ENCODE measurements at regions of chr11 and their contacts with region 1.

Region 1: GRCh38 chr11:129143335-129143734 is 48.8 kb downstream of the ARHGAP32 start:
- DNase-seq: peak; percentile 58 to 79
- ATAC-seq: peak; percentile 92 to 99
- H3K4me3 ChIP-seq: no peak overlapping the region
- H3K27ac ChIP-seq: no peak overlapping the region
- H3K4me1 ChIP-seq: peaks cover 0 to 4% of the 10 kb centered on the region in 2 donors
- H3K27me3 ChIP-seq: no peaks in the 10 kb centered on the region
- CTCF ChIP-seq: no peak
- POLR2A ChIP-seq: no peak

Region 2: DNA sequence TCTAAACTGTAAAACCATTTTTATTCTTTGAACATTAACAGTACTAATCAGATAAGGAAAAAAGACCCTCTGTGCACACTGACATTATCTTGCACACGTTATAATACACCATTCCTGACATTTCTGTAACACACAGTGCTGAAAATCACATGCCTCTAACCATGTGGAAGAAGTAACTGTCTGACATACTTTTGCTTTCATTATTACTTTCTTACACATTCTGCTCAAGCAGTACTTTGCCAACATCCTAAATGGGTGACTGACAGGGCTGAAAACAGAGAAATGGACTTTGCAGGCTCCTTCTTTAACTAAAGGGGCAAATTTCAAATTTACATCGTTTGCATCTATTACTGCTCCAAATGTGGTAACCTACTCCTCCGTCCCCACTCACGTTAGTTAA is 177.8 kb before region 1 on chr11:
- in situ Hi-C with region 1: no loop called
- intact Hi-C with region 1: no loop called
- DNase-seq: no peak
- ATAC-seq: no peak
- H3K4me3 ChIP-seq: no peak overlapping the region
- H3K27ac ChIP-seq: no peak overlapping the region
- H3K4me1 ChIP-seq: no peaks in the 10 kb centered on the region
- H3K27me3 ChIP-seq: no peaks in the 10 kb centered on the region
- CTCF ChIP-seq: no peak
- POLR2A ChIP-seq: no peak

Region 3: DNA sequence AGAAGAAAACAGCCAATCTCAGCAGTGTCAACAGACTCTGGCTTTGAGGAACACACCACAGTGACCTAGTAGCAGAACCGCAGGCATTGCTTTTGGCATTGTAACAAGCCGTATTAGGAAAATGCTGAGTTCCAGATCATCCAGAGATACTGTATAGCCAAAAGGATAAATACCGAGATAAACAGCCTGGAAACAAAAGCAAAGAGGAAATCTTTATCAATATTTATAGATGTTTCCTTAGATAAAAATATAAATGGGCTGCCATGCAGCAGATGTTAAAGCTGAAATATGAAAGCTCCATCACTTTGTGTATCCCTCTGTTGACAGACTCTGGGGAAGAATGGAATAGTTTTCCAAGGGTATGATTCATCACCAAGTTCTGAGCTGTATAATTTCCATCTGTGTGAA is 101.7 kb before region 1 on chr11:
- in situ Hi-C with region 1: loop called in 1 of 4 experiments (anchors 25 kb)
- intact Hi-C with region 1: no loop called
- DNase-seq: no peak
- ATAC-seq: no peak
- H3K4me3 ChIP-seq: no peak overlapping the region
- H3K27ac ChIP-seq: no peak overlapping the region
- H3K4me1 ChIP-seq: no peaks in the 10 kb centered on the region
- H3K27me3 ChIP-seq: no peaks in the 10 kb centered on the region
- CTCF ChIP-seq: no peak
- POLR2A ChIP-seq: no peak

Region 4: DNA sequence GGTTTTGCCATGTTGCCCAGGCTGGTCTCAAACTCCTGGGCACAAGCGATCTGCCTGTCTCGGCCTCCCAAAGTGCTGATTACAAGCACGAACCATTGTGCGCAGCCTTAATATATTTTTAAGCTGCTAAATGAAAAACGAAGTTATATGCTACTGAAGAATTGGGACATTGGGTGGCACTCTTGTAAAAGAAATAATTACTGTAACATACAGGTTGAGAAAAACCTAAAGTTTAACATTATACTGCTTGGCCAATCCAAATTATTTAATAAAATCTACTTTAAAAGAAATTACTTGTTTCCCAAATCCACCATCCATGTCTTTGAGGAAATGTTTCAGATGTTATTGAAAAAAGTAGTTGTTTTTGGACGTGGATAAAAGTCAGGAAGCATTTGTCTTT is 86.7 kb after region 1 on chr11:
- in situ Hi-C with region 1: no loop called
- intact Hi-C with region 1: no loop called
- DNase-seq: no peak
- ATAC-seq: no peak
- H3K4me3 ChIP-seq: no peak overlapping the region
- H3K27ac ChIP-seq: no peak overlapping the region
- H3K4me1 ChIP-seq: no peaks in the 10 kb centered on the region
- H3K27me3 ChIP-seq: no peaks in the 10 kb centered on the region
- CTCF ChIP-seq: no peak
- POLR2A ChIP-seq: no peak

Region 5: GRCh38 chr11:129279326-129280026 is 136.1 kb after region 1 on chr11:
- in situ Hi-C with region 1: no loop called
- intact Hi-C with region 1: loop called (anchors 2 kb)
- DNase-seq: peak; percentile 52 to 69
- ATAC-seq: peak; percentile 84 to 87
- H3K4me3 ChIP-seq: peak overlapping the region; percentile 51 to 74 (median 63)
- H3K27ac ChIP-seq: peak overlapping the region; percentile 67 to 70 (median 68)
- H3K4me1 ChIP-seq: peaks cover 37 to 46% of the 10 kb centered on the region in 2 donors
- H3K27me3 ChIP-seq: no peaks in the 10 kb centered on the region
- CTCF ChIP-seq: no peak
- POLR2A ChIP-seq: peak; percentile 62

Region 6: DNA sequence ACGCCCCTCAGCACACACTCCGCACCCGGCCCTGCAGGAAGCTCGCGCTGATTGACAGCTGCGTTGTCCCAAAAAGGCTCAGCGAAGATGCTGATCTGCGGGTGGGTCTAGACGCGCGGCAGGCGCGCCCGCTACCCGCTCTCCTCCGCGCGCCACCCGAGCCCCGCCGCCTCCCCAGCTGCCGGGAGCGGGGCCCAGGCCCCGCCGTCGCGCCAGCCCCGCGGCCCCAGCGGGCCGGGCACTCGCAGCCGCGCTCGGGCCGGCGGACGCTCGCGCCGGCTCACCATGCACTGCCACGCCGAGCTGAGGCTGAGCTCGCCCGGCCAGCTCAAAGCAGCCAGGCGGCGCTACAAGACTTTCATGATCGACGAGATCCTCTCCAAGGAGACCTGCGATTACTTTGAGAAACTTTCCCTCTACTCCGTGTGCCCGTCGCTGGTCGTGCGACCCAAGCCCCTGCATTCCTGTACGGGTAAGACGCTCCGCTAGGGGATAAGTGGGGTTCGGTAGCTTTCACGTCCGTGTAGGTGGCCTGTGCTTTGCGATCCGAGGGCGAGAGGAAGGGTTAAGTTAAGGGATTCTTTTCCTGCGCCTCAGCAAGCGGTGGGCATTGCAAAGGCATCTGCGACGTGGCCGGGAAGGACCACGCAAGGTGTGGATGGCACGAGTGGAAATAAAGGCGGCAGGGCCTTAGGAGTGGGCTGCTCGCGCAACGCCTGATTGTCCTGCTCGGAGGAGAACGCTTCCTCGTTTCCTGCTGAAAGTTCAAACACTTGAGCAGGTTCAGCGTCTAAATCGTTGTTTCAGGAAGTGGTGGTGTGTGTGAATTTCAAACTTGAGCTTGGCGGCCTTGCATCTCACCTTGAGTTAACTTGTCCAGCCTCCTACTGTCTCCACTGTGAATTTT is 232.7 kb after region 1 on chr11 and contains the start of gene BARX2:
- in situ Hi-C with region 1: no loop called
- intact Hi-C with region 1: no loop called
- DNase-seq: no peak
- ATAC-seq: peak in 1 of 2 donors; percentile 52
- H3K4me3 ChIP-seq: peak within 1 kb of the TSS in 3 of 4 donors; percentile 22 to 46 (median 26)
- H3K27ac ChIP-seq: peak within 1 kb of the TSS in 1 of 4 donors; percentile 47
- H3K4me1 ChIP-seq: peaks cover 0 to 5% of the 10 kb centered on the region in 2 donors
- H3K27me3 ChIP-seq: peaks cover 70 to 91% (median 73%) of the 10 kb centered on the region in 3 donors
- CTCF ChIP-seq: no peak
- POLR2A ChIP-seq: no peak
- total RNA-seq, gene BARX2: 1.2 to 4.4 TPM in 2 of 4 donors, not detected in the others

Measured in gastrocnemius medialis (tissue), 4 donors.